Activated CD4-positive, alpha-beta T cell treated with anti-CD3 and anti-CD28 coated beads for 36 hours (primary cell): ENCODE measurements at regions of chr17 and their contacts with region 1.

Region 1: GRCh38 chr17:72151565-72152391 is 31.0 kb downstream of the SOX9 start:
- DNase-seq: no peak
- ATAC-seq: no peak
- H3K4me3 Mint-ChIP-seq: no peak overlapping the region
- H3K27ac Mint-ChIP-seq: no peak overlapping the region
- H3K4me1 Mint-ChIP-seq: no peaks in the 10 kb centered on the region
- H3K27me3 Mint-ChIP-seq: peaks cover 2% of the 10 kb centered on the region

Region 2: GRCh38 chr17:72165867-72166439 is 14.2 kb after region 1 on chr17:
- CTCF ChIA-PET with region 1: no interaction called
- POLR2A ChIA-PET with region 1: no interaction called
- intact Hi-C with region 1: no loop called
- DNase-seq: no peak
- ATAC-seq: no peak
- H3K4me3 Mint-ChIP-seq: no peak overlapping the region
- H3K27ac Mint-ChIP-seq: no peak overlapping the region
- H3K4me1 Mint-ChIP-seq: no peaks in the 10 kb centered on the region
- H3K27me3 Mint-ChIP-seq: no peaks in the 10 kb centered on the region

Region 3: DNA sequence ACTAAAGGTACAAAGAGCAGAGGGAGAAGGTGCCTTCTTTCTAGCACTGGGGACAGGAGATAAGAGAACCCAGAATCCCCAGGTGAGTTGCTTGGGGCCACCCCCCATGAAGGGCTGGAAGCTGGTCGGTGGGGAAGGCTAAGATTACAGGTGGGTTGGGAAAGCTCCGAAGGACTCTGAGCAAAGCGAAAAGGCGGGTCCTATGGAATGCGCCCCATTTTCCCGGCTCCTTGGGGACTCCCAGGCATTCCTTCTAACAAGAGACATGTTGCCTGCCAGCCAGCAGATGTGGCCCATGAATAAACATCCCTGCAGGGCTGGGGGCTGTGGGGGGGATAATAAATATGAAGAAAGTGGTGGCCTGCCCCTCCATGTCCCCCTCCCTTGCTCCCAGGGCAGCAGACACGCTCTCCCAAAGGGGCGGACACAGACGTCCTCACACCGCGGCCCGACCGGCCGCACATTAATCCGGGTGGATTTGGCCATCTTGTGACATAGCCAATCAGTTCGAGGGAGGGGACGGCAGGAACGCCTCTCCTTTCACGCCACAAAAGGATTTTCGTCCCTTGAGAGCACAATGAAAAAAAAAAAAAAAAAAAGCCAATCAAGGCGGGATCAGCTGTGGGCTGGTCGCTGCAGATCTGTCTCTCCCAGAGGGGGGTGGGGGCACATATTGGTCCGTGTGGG is 67.5 kb after region 1 on chr17:
- CTCF ChIA-PET with region 1: no interaction called
- POLR2A ChIA-PET with region 1: no interaction called
- intact Hi-C with region 1: loop called in 1 of 2 experiments (anchors 10 kb)
- DNase-seq: no peak
- ATAC-seq: no peak
- H3K4me3 Mint-ChIP-seq: no peak overlapping the region
- H3K27ac Mint-ChIP-seq: no peak overlapping the region
- H3K4me1 Mint-ChIP-seq: no peaks in the 10 kb centered on the region
- H3K27me3 Mint-ChIP-seq: peaks cover 28% of the 10 kb centered on the region